Activated naive CD4-positive, alpha-beta T cell treated with anti-CD3 and anti-CD28 coated beads for 36 hours (primary cell): ENCODE measurements at regions of chr3 and their contacts with region 1.

Region 1: GRCh38 chr3:15199493-15200105 is 6.4 kb upstream of the CAPN7 start:
- DNase-seq: no peak
- H3K4me3 Mint-ChIP-seq: no peak overlapping the region
- H3K27ac Mint-ChIP-seq: no peak overlapping the region
- H3K4me1 Mint-ChIP-seq: peaks cover 7% of the 10 kb centered on the region
- H3K27me3 Mint-ChIP-seq: no peaks in the 10 kb centered on the region

Region 2: GRCh38 chr3:14988988-14989394 is 210.6 kb before region 1 on chr3:
- CTCF ChIA-PET with region 1: no interaction called
- intact Hi-C with region 1: no loop called
- DNase-seq: peak; percentile 77
- H3K4me3 Mint-ChIP-seq: no peak overlapping the region
- H3K27ac Mint-ChIP-seq: peak overlapping the region; percentile 27
- H3K4me1 Mint-ChIP-seq: peaks cover 50% of the 10 kb centered on the region
- H3K27me3 Mint-ChIP-seq: no peaks in the 10 kb centered on the region

Region 3: DNA sequence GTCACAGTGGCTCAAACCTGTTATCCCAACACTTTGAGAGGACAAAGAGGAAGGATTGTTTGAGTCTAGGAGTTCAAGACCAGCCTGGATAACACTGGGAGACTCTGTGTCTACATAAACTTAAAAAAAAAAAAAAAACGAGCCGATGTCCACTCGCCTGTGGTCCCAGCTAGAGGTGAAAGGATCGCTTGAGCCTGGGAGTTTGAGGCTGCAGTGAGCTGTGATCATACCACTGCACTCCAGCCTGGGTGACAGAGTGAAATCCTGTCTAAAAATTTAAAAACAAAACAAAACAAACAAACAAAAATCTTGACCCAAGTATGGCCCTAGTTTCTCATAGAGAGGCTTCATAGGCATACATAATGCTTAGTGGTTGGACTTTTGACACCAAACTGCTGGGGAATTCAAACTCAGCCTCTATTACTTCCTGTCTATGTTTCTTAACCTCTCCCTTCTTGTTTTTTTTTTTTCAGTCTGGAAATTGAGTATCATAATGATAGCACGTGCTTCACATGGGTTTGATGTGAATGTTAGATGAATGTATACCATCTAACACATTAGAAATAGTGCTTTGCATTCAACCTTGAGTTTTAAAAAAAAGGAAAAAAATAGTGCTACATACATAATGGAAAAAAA is 40.0 kb before region 1 on chr3:
- CTCF ChIA-PET with region 1: no interaction called
- intact Hi-C with region 1: loop called (anchors 5 kb)
- DNase-seq: no peak
- H3K4me3 Mint-ChIP-seq: no peak overlapping the region
- H3K27ac Mint-ChIP-seq: no peak overlapping the region
- H3K4me1 Mint-ChIP-seq: peaks cover 7% of the 10 kb centered on the region
- H3K27me3 Mint-ChIP-seq: peaks cover 11% of the 10 kb centered on the region

Region 4: DNA sequence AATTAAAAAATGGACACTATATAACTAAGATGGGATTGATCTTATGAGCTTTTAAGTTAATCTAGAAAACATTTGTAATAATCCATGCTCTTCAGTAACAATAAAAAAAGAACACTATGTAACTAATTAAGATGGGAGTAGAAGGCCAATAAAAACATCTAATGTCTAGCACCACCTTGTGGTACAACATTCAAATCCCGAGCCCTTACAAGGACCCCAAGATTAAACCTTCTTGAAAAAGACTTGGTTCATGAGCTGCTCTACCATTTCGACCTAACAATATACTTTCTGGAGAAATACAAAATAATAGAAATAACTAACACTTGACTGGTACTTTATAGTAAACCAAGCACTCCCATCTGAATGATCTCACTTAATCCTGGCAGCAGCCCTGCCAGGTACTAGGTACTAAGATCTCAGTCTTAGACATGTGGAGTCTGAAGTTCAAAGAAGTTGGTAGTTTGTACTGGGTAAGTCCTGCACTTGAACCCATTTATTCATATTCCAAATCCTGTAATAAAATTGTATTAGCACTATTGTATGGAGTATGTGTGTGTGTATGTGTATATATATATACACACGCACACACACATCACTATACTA is 205.9 kb after region 1 on chr3:
- CTCF ChIA-PET with region 1: interaction called, 38 read pairs
- intact Hi-C with region 1: loop called (anchors 1 kb)
- DNase-seq: peak; percentile 10
- H3K4me3 Mint-ChIP-seq: no peak overlapping the region
- H3K27ac Mint-ChIP-seq: no peak overlapping the region
- H3K4me1 Mint-ChIP-seq: peaks cover 1% of the 10 kb centered on the region
- H3K27me3 Mint-ChIP-seq: no peaks in the 10 kb centered on the region